Prostate gland (tissue), 2 donors: ENCODE measurements at regions of chr6 and their contacts with region 1.

Region 1: DNA sequence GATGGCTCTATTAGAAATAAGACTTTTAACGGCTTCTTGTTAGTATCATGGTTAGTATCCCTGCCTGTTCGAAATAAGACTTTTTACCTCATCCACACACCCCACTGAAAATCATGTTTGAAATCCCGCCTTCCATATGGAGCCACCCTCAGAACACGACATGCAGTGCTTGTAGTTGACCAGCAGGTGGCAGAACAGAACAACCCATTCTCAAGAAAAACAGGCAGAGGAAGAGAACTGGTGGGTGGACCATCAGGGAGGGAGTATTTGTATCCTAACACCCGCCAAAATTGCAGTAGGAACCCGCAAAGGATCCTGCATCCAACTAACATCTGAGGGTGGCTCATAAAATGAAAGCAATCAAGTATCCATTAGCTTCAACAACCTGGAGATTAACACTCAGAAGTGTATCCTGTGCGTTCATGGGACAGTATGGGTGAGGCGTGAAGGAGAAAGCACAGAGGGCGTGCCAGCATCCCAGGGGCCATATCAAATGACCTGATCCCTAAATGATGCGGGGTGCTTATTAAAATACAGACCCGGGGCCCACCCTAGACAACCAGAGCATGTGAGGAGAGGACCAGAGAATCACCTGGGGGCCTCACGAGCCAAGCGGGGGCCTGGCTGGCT is 89.6 kb upstream of the NHSL1 start:
- DNase-seq: peak; percentile 52
- H3K4me3 ChIP-seq: no peak overlapping the region
- H3K27ac ChIP-seq: no peak overlapping the region
- H3K4me1 ChIP-seq: no peaks in the 10 kb centered on the region
- H3K27me3 ChIP-seq: no peaks in the 10 kb centered on the region
- CTCF ChIP-seq: peak; percentile 78 to 90 (median 86)
- POLR2A ChIP-seq: no peak

Region 2: DNA sequence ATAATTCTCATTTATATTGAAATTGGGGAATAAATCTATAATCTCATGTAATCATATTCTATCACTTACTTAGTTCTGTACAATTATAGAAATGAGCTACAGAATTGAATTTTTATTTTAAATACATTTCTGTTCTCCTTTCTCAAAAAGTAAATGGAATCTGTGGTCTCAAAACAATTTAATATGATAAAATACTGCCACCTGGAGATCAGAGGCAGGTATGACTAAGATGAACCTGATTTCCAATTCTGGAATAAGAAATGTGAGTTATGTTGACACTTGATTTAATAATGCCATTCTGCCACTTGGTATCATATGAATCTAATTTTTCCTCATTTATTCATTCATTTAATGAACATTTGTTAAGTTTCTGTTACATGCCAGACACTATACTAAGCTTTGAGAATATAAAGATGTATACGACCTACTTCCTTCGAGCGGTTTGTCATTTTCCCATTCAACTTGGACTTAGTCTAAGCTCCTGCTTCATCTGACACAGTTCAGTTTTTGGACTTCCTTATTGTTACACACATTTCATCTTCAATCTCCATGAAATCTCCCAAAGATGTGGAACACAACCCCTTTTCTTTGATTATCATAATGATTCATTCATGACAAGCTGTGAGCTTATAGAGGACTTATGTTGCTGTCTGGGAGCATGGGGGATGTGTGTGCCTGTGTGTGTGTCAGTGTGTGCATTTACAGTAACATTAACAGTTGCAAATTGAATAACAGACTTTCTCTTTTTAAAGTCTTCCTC is 177.2 kb after region 1 on chr6:
- intact Hi-C with region 1: loop called (anchors 2 kb)
- DNase-seq: no peak
- H3K4me3 ChIP-seq: no peak overlapping the region
- H3K27ac ChIP-seq: no peak overlapping the region
- H3K4me1 ChIP-seq: no peaks in the 10 kb centered on the region
- H3K27me3 ChIP-seq: no peaks in the 10 kb centered on the region
- CTCF ChIP-seq: peak in 3 of 4 experiments; percentile 53 to 87 (median 86)
- POLR2A ChIP-seq: no peak